Transverse colon (tissue), 4 donors: ENCODE measurements at regions of chr1 and their contacts with region 1.

Region 1: GRCh38 chr1:29124366-29125236 is 898 bp upstream of the TMEM200B start:
- DNase-seq: peak; percentile 69
- H3K4me3 ChIP-seq: peak overlapping the region; percentile 46 to 68 (median 58)
- H3K27ac ChIP-seq: peak overlapping the region; percentile 94 to 97 (median 94)
- H3K4me1 ChIP-seq: peaks cover 7 to 50% (median 42%) of the 10 kb centered on the region in 4 donors
- H3K27me3 ChIP-seq: peaks cover 53% of the 10 kb centered on the region
- CTCF ChIP-seq: peak; percentile 65 to 91 (median 85)
- EP300 ChIP-seq: no peak
- POLR2A ChIP-seq: peak; percentile 70

Region 2: GRCh38 chr1:29181413-29182225 is 57.0 kb after region 1 on chr1 and contains the start of gene SRSF4:
- in situ Hi-C with region 1: no loop called
- intact Hi-C with region 1: loop called (anchors 5 kb)
- DNase-seq: peak; percentile 99
- H3K4me3 ChIP-seq: peak within 1 kb of the TSS; percentile 91 to 99 (median 95)
- H3K27ac ChIP-seq: peak within 1 kb of the TSS; percentile 99 to 100 (median 100)
- H3K4me1 ChIP-seq: peaks cover 28 to 55% (median 43%) of the 10 kb centered on the region in 4 donors
- H3K27me3 ChIP-seq: no peaks in the 10 kb centered on the region
- CTCF ChIP-seq: peak; percentile 51 to 92 (median 72)
- EP300 ChIP-seq: no peak
- POLR2A ChIP-seq: peak; percentile 69
- total RNA-seq, gene SRSF4: 67.3 to 98.0 (median 72.4) TPM

Region 3: DNA sequence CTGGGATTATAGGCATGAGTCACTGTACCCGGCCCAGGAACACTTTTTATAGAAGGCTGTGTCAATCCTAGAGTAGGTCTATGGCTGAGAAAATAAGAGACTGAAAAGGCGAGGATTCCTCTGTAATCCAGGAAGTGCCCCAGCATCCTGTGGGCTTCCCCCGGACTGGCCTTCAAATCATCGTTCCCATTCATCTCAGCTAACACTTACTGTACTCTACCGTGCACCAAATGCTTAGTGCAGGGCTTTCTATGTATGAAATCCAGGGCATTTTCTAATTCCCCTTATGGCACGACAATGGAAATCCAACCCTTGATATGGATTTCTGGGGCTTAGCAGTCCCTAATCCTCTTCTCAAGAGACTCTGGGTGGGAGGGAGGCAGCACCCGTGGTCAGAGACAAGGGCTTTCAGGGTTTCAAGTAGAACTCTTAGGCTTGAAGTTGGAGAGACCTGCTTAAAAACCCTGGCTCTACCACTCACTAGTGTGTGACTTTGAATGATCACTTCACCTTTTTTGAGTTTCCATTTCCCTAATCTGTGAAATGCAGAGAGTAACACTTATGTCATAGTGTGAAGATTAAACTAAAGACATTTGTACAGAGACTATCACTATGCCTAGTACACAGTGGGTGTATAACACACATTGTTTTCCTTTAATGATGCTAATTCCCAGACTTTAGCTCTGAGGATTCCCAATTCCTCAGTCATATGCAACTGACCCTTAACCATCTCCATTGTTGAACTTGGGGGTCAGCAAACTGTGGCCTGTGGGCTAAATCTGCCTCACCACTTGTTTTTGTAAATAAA is 85.9 kb after region 1 on chr1:
- in situ Hi-C with region 1: loop called in 1 of 4 experiments (anchors 5 kb)
- intact Hi-C with region 1: no loop called
- DNase-seq: no peak
- H3K4me3 ChIP-seq: no peak overlapping the region
- H3K27ac ChIP-seq: no peak overlapping the region
- H3K4me1 ChIP-seq: no peaks in the 10 kb centered on the region
- H3K27me3 ChIP-seq: no peaks in the 10 kb centered on the region
- CTCF ChIP-seq: no peak
- EP300 ChIP-seq: no peak
- POLR2A ChIP-seq: no peak